ENCODE measurements at regions of chr10 and their contacts with region 1.

Region 1: DNA sequence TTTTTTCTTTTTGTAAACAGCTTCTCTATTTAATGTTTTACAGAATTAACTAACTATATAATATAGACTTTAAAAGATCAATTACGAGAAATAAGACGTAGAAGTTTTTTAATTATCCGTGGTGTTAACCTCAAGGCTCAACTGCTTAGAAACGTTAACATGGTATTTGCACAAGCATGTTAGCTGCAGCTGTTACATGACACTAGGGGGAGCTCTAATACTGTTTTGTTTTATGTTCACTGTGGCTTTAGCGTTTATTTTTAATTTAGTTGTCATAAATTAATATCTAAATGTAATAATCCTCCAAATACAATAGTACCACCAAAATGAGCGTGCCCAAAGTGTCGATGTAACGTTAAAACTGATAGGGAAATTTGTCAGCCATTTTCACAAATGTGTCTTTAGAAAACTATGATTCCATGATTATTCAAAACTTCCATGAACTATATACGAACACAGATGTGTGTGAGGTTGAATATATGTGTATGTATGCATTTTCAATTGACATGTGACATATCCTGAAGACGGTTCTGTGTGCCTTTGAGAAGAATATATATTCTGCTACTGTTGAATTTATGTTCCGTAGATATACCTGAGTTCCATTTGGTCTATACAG is 828.8 kb upstream of the MBL2 start:
- DNase-seq: no peak
- ATAC-seq: peak; percentile 79
- H3K4me3 ChIP-seq: no peak overlapping the region
- H3K27ac ChIP-seq: no peak overlapping the region
- H3K4me1 ChIP-seq: no peaks in the 10 kb centered on the region
- H3K27me3 ChIP-seq: no peaks in the 10 kb centered on the region
- CTCF ChIP-seq: peak; percentile 77 to 84 (median 78)
- EP300 ChIP-seq: no peak
- POLR2A ChIP-seq: no peak
- RAD21 ChIP-seq: peak; percentile 73

Region 2: GRCh38 chr10:52883996-52884871 is 717.1 kb before region 1 on chr10:
- CTCF ChIA-PET with region 1: no interaction called
- POLR2A ChIA-PET with region 1: no interaction called
- RAD21 ChIA-PET with region 1: no interaction called
- SMC1A ChIA-PET with region 1: no interaction called
- in situ Hi-C with region 1: no loop called
- intact Hi-C with region 1: loop called (anchors 10 kb)
- DNase-seq: peak; percentile 25
- ATAC-seq: peak; percentile 95
- H3K4me3 ChIP-seq: no peak overlapping the region
- H3K27ac ChIP-seq: no peak overlapping the region
- H3K4me1 ChIP-seq: no peaks in the 10 kb centered on the region
- H3K27me3 ChIP-seq: no peaks in the 10 kb centered on the region; a peak in 1 of 4 replicates
- CTCF ChIP-seq: peak; percentile 78 to 84 (median 83)
- EP300 ChIP-seq: no peak
- POLR2A ChIP-seq: no peak
- RAD21 ChIP-seq: peak; percentile 90

Region 3: GRCh38 chr10:53209944-53210611 is 391.3 kb before region 1 on chr10:
- CTCF ChIA-PET with region 1: interaction called, 3 read pairs
- POLR2A ChIA-PET with region 1: no interaction called
- RAD21 ChIA-PET with region 1: no interaction called
- SMC1A ChIA-PET with region 1: no interaction called
- in situ Hi-C with region 1: no loop called
- intact Hi-C with region 1: loop called (anchors 10 kb)
- DNase-seq: no peak
- ATAC-seq: peak; percentile 65
- H3K4me3 ChIP-seq: no peak overlapping the region
- H3K27ac ChIP-seq: no peak overlapping the region
- H3K4me1 ChIP-seq: no peaks in the 10 kb centered on the region
- H3K27me3 ChIP-seq: no peaks in the 10 kb centered on the region
- CTCF ChIP-seq: peak in 1 of 3 experiments; percentile 42; a peak in 1 of 6 replicates
- EP300 ChIP-seq: no peak
- POLR2A ChIP-seq: no peak
- RAD21 ChIP-seq: no peak

Region 4: GRCh38 chr10:55263327-55263726 is 1662.0 kb after region 1 on chr10:
- CTCF ChIA-PET with region 1: no interaction called
- POLR2A ChIA-PET with region 1: no interaction called
- RAD21 ChIA-PET with region 1: no interaction called
- SMC1A ChIA-PET with region 1: interaction called, 3 read pairs
- in situ Hi-C with region 1: no loop called
- intact Hi-C with region 1: loop called (anchors 10 kb)
- DNase-seq: no peak
- ATAC-seq: peak; percentile 17; the same call in 1 of the 3 replicates
- H3K4me3 ChIP-seq: no peak overlapping the region
- H3K27ac ChIP-seq: no peak overlapping the region
- H3K4me1 ChIP-seq: no peaks in the 10 kb centered on the region
- H3K27me3 ChIP-seq: 0 out of 4 replicates have a peak, but pooled peaks cover 0 to 2% of the 10 kb centered on the region in 2 experiments
- CTCF ChIP-seq: no peak
- EP300 ChIP-seq: no peak
- POLR2A ChIP-seq: no peak
- RAD21 ChIP-seq: no peak